SK-N-SH (cell line): ENCODE measurements at regions of chr17 and their contacts with region 1.

Region 1: GRCh38 chr17:79036596-79036995 is 12.6 kb downstream of the C1QTNF1 start:
- DNase-seq: no peak
- H3K4me3 ChIP-seq: no peak overlapping the region
- H3K27ac ChIP-seq: peak overlapping the region; percentile 2 to 47; a peak in 2 of 4 replicates
- H3K4me1 ChIP-seq: peaks cover 10 to 16% of the 10 kb centered on the region in 2 experiments; a peak in 3 of 4 replicates
- H3K27me3 ChIP-seq: no peaks in the 10 kb centered on the region
- CTCF ChIP-seq: no peak
- EP300 ChIP-seq: no peak; a peak in 1 of 4 replicates
- RAD21 ChIP-seq: no peak

Region 2: DNA sequence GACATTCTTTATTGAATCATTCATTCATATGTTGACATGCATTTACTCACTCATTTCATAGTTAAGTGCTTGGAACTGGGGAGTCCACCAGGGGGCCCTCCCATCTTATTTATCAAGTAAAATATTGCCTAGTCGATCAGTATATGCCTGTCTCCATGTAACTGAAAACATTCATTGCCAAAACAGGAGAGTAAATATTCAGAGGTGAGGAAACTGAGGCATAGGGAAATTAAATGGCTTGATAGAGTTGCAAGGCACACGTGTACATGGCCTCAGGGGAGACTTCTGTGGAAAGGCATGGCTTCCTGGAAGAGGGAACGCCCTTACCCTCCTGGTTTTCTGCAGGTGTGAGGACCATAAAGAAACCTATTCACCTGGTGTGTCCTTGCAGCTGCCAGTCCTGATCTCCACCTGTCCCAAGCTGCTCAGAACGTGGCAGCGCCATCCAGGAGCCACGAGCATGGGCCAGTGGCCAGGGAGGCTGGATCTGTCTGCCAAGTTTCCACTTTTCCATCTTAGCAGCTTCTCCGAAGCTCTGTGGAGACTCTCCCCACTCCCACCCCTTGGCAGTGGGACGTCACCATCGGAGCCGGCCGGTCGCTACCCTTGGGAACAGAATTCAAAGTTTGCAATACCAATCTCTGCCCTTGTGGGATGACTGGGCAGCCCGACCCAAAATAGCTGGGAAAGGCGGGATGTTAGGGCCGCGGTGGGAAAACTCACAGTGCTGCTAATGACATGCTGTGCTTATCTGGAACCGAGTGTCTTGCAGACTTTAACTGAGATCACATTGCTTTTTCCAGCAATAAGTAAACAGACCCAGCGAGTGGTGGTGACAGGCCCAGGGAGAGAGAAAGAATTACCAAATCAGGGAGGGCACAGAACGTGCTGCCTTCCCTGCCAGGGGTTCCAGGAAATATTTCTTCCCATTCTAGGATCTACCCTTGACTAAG is 16.7 kb before region 1 on chr17:
- CTCF ChIA-PET with region 1: interaction called, 191 read pairs
- POLR2A ChIA-PET with region 1: no interaction called
- DNase-seq: peak; percentile 81
- H3K4me3 ChIP-seq: no peak overlapping the region; a peak in 1 of 4 replicates
- H3K27ac ChIP-seq: no peak overlapping the region
- H3K4me1 ChIP-seq: peaks cover 3 to 12% of the 10 kb centered on the region in 2 experiments; a peak in 3 of 4 replicates
- H3K27me3 ChIP-seq: no peaks in the 10 kb centered on the region
- CTCF ChIP-seq: peak; percentile 99
- EP300 ChIP-seq: no peak
- RAD21 ChIP-seq: peak; percentile 98

Region 3: GRCh38 chr17:79305768-79306423 is 269.3 kb after region 1 on chr17:
- CTCF ChIA-PET with region 1: no interaction called
- POLR2A ChIA-PET with region 1: no interaction called
- DNase-seq: peak; percentile 95
- H3K4me3 ChIP-seq: no peak overlapping the region
- H3K27ac ChIP-seq: peak overlapping the region in 1 of 2 experiments; percentile 91; a peak in 2 of 4 replicates
- H3K4me1 ChIP-seq: peaks cover 0 to 24% of the 10 kb centered on the region in 2 experiments; a peak in 2 of 4 replicates
- H3K27me3 ChIP-seq: 0 out of 2 replicates have a peak, but pooled peaks cover 9% of the 10 kb centered on the region
- CTCF ChIP-seq: no peak
- EP300 ChIP-seq: peak in 1 of 2 experiments; percentile 65; a peak in 2 of 4 replicates
- RAD21 ChIP-seq: no peak